Right ventricle myocardium inferior (tissue), 1 donor: ENCODE measurements at regions of chr18 and their contacts with region 1.

Region 1: GRCh38 chr18:45212181-45213039 is 402.9 kb upstream of the SLC14A2 start:
- DNase-seq: peak; percentile 80
- ATAC-seq: peak; percentile 96

Region 2: DNA sequence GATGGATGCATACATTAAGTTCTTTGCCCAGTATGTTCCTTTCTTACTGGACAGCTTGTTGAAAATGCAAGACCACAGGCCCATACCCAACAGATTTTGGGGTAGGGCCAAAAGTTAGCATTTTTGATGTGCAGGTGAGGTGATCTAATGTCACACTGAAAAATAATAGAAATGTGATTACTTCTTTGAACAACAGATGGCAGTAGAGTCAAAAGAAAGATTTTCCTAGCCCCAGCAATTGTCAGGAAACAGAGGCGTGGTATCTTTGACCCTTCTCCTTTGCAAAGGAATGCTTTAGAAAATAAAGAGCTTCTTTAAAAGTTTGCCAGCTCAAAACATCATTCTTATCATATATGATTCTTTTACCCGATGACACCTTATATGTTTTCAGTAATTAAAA is 1591.5 kb before region 1 on chr18:
- intact Hi-C with region 1: loop called (anchors 5 kb)
- DNase-seq: no peak
- ATAC-seq: no peak

Region 3: GRCh38 chr18:44130376-44130942 is 1082.0 kb before region 1 on chr18:
- intact Hi-C with region 1: loop called (anchors 10 kb)
- DNase-seq: no peak
- ATAC-seq: no peak

Region 4: GRCh38 chr18:44579028-44579702 is 633.2 kb before region 1 on chr18:
- intact Hi-C with region 1: loop called (anchors 10 kb)
- DNase-seq: no peak
- ATAC-seq: no peak

Region 5: GRCh38 chr18:44679056-44679905 is 533.1 kb before region 1 on chr18:
- intact Hi-C with region 1: loop called (anchors 1 kb)
- DNase-seq: peak; percentile 93
- ATAC-seq: peak; percentile 98

Region 6: DNA sequence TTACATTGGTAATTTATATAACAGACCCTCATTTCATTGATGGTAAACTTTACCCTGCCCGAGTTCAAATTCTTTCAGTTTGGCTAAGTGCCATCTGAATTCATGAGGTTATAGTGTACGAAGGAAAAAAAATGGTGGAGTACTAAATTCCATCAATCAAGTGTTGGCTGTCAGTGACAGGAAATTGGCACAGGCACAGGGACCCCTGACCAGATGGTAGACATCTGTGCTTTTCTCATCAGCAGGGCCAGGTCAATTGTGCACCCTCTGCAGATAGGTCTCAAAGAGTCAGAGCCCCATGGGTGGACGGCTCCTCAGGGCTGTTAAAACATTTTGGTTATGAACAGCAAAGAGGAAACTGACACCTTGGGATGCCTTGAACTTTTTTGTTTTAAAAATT is 92.5 kb before region 1 on chr18:
- intact Hi-C with region 1: no loop called
- DNase-seq: no peak
- ATAC-seq: no peak

Region 7: DNA sequence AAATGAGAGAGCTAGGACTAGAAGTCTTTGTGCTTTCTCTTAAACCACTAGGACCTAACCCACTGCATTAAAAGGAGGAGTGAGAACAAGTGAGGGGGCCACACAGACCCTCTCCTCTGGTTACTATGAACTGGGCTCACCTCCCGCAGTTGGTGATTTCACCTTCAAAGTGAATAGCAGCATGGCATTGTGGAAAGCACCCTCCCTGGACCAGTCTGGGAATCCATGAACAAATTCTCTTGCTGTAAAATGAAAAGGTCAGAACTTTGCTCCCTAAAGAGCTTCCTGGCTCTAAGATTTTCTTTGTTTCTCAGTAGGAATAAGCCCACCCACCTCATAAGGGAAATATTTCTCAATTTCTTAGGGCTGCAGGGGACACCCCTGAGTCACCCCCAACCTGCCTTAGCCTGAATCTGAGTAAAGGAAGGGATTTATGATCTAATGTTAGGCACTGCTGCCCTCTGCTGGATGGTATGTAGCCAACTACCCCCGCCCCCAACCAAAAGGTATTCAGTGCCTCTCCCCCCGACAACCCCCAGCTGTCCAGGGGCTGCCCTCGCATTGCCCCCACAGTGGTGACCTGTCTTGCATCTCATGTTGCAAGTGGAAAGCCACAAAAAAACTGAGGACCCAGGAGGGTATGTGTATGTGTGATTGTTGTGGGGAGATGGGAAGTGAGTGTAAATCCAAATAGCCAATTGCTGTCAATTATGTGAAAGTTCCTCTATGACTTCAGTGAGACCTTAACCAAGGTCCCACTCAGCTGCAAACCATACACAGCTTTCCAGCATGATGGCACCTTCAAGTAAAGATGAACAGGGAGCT is 171.9 kb after region 1 on chr18:
- intact Hi-C with region 1: loop called (anchors 10 kb)
- DNase-seq: no peak
- ATAC-seq: peak; percentile 79